Mucosa of descending colon (tissue), 3 donors: ENCODE measurements at regions of chr1 and their contacts with region 1.

Region 1: GRCh38 chr1:20981915-20982314 is 194.8 kb downstream of the EIF4G3 start:
- DNase-seq: no peak
- ATAC-seq: peak; percentile 58
- H3K4me3 ChIP-seq: no peak overlapping the region
- H3K4me1 ChIP-seq: no peaks in the 10 kb centered on the region
- CTCF ChIP-seq: no peak

Region 2: GRCh38 chr1:20913242-20913641 is 68.7 kb before region 1 on chr1:
- intact Hi-C with region 1: no loop called
- DNase-seq: no peak
- ATAC-seq: peak; percentile 74
- H3K4me3 ChIP-seq: no peak overlapping the region
- H3K4me1 ChIP-seq: no peaks in the 10 kb centered on the region
- CTCF ChIP-seq: no peak

Region 3: GRCh38 chr1:20949871-20950590 is 31.9 kb before region 1 on chr1:
- intact Hi-C with region 1: no loop called
- DNase-seq: no peak
- ATAC-seq: no peak
- H3K4me3 ChIP-seq: no peak overlapping the region
- H3K4me1 ChIP-seq: no peaks in the 10 kb centered on the region
- CTCF ChIP-seq: no peak

Region 4: DNA sequence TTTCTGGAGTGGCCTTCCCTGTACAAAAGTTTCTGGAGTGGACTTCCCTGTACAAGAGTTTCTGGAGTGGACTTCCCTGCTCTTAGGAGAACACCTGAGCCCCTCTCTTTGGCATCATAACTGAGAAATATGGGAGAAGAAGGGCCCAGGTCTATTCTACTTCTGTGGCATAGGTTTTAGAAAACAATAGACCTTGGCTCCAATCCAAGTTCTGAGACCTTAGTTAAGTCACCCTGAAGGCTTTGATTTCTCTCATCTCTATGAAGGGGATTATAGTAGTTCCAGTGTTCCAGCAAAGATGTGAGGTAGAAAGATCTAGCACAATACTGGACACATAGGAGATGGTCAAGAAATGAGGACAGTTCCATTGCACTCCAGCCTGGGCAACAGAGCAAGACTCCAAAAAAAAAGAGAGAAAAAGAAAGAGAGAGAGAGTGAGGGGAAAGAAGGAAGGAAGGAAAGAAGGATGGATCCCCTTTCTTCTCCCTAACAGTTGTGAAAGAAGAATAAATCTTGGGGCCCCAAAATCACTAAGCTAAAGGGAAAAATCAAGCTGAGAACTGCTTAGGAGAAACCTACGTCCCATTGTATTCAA is 208.1 kb after region 1 on chr1:
- intact Hi-C with region 1: loop called (anchors 10 kb)
- DNase-seq: no peak
- ATAC-seq: peak; percentile 6
- H3K4me3 ChIP-seq: no peak overlapping the region
- H3K4me1 ChIP-seq: peaks cover 12% of the 10 kb centered on the region
- CTCF ChIP-seq: no peak

Region 5: GRCh38 chr1:22195802-22196440 is 1214.0 kb after region 1 on chr1:
- intact Hi-C with region 1: no loop called
- DNase-seq: no peak
- ATAC-seq: no peak
- H3K4me3 ChIP-seq: no peak overlapping the region
- H3K4me1 ChIP-seq: no peaks in the 10 kb centered on the region
- CTCF ChIP-seq: no peak